ENCODE measurements at regions of chr2 and their contacts with region 1.

Region 1: DNA sequence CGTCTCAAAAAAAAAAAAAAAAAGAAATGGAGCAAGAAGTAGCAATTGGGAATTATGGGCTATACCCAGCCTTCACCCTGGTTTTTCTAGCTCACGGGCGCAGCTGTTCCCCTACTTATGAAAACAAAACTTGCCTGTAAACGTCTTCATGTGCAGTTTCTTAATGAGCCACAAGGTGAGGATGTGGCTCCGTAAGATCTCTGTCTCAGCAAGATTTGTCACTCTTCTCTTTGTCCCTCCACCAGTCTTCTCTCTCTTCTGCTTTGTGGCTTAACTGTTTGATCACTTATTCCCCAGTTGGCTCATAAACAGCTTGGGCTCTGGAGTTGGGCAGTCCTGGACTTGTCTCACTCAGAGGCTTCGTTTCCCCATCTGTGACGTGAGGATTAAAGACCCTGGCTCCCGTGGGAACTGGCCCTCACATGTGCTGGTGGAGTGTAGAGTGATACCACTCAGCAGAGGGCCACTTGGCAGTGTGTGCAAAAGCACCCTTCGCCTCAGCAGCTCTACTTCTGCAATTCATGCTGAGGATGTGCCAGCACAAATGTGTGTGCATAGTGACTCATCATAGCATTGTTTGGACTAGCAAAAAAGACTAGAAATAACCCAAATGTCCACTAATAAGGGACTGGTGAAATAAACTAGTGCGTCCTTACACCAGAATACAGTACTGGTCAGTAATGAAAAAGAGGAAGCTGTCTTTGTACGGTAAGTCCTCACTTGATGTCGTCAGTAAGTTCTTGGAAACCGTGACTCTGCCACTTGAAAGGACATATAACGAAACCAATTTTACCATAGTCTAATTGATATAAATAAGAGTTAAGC is 8.7 kb downstream of the CEP68 start:
- DNase-seq: peak; percentile 70
- ATAC-seq: peak; percentile 89
- H3K4me3 Mint-ChIP-seq: no peak overlapping the region
- H3K27ac Mint-ChIP-seq: peak overlapping the region; percentile 82
- H3K4me1 Mint-ChIP-seq: peaks cover 40% of the 10 kb centered on the region
- H3K27me3 Mint-ChIP-seq: no peaks in the 10 kb centered on the region
- CTCF ChIP-seq: peak; percentile 80

Region 2: DNA sequence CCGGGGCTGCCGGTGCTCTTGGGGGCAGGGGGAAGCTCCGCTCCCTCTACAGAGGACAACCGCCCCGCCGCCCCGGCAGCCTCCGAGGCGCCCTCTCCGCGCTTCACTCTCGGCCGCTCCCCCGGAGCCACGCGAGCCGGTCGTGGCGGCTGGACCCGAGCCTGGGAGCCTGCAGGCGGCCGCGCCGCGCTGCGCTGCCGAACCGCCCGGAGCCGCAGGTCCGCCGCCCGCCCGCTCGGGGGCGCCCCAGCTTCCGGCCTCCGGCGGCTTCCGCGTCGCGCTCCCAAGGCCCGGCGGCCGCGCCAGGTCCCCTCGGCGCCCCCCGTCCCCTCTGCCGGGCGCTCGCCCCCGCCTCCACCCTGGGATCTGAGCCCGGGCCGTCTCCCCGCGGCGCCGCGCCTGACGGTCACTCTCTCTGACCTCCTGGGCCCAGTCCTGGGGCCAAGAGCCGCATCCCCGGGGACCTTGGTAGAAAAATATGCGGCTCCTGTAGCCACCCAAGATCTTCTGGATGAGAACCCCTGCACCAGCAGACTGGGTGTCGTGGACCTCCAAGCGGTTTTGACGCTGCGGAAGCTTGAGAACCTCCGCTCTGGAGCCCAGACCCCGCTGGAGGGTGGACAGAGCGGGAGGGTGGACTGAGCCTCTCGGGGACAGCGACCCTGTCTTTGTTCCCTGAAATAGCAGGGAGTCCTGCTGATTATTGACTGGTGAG is 455.6 kb before region 1 on chr2:
- CTCF ChIA-PET with region 1: no interaction called
- POLR2A ChIA-PET with region 1: no interaction called
- intact Hi-C with region 1: no loop called
- DNase-seq: peak; percentile 60
- ATAC-seq: peak; percentile 60
- H3K4me3 Mint-ChIP-seq: peak overlapping the region; percentile 60
- H3K27ac Mint-ChIP-seq: peak overlapping the region; percentile 59
- H3K4me1 Mint-ChIP-seq: peaks cover 22% of the 10 kb centered on the region
- H3K27me3 Mint-ChIP-seq: no peaks in the 10 kb centered on the region
- CTCF ChIP-seq: peak; percentile 26

Region 3: GRCh38 chr2:65024149-65024829 is 40.7 kb before region 1 on chr2:
- CTCF ChIA-PET with region 1: no interaction called
- POLR2A ChIA-PET with region 1: no interaction called
- intact Hi-C with region 1: no loop called
- DNase-seq: no peak
- ATAC-seq: no peak
- H3K4me3 Mint-ChIP-seq: no peak overlapping the region
- H3K27ac Mint-ChIP-seq: no peak overlapping the region
- H3K4me1 Mint-ChIP-seq: peaks cover 4% of the 10 kb centered on the region
- H3K27me3 Mint-ChIP-seq: no peaks in the 10 kb centered on the region
- CTCF ChIP-seq: no peak

Region 4: GRCh38 chr2:65040400-65041261 is 24.3 kb before region 1 on chr2:
- CTCF ChIA-PET with region 1: interaction called, 12 read pairs
- POLR2A ChIA-PET with region 1: no interaction called
- intact Hi-C with region 1: no loop called
- DNase-seq: peak; percentile 87
- ATAC-seq: peak; percentile 97
- H3K4me3 Mint-ChIP-seq: no peak overlapping the region
- H3K27ac Mint-ChIP-seq: no peak overlapping the region
- H3K4me1 Mint-ChIP-seq: peaks cover 11% of the 10 kb centered on the region
- H3K27me3 Mint-ChIP-seq: no peaks in the 10 kb centered on the region
- CTCF ChIP-seq: peak; percentile 99

Region 5: DNA sequence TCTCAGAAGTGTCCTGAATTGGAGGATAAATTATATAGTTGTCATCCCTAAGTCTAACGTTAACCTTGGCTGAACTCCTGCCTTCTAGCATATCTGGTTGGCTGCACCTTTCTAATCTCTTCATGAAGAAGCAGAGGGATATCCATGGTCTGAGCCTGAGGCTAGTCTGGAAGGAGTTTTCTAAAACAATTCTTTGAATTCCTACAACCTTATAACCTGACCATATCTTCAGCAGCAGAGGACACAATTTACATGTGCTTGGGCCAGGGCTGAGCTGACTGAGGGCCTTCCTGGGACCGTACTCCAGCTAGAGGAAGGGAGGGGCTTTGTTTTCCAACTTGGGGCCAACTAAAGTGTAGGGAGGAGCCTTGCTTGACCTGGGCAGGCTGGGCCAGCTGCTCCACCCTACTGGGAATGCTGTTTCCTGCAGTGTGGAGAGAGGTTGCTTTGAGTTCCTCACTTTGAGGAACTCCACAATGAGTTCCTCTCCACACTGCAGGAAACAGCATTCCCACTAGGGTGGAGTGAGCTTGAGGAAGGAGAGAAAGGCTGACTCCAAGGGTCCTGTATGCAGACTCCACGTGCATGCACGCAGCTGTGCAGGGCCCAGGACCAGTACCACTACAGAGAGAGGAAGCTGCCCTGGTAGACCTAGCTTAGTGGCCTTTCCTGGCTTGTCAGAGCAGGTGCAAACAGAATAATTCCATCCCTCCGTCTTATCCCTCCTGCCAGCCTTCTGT is 10.8 kb after region 1 on chr2:
- CTCF ChIA-PET with region 1: interaction called, 21 read pairs
- POLR2A ChIA-PET with region 1: interaction called, 6 read pairs
- intact Hi-C with region 1: no loop called
- DNase-seq: no peak
- ATAC-seq: no peak
- H3K4me3 Mint-ChIP-seq: no peak overlapping the region
- H3K27ac Mint-ChIP-seq: no peak overlapping the region
- H3K4me1 Mint-ChIP-seq: peaks cover 3% of the 10 kb centered on the region
- H3K27me3 Mint-ChIP-seq: no peaks in the 10 kb centered on the region
- CTCF ChIP-seq: no peak

Region 6: DNA sequence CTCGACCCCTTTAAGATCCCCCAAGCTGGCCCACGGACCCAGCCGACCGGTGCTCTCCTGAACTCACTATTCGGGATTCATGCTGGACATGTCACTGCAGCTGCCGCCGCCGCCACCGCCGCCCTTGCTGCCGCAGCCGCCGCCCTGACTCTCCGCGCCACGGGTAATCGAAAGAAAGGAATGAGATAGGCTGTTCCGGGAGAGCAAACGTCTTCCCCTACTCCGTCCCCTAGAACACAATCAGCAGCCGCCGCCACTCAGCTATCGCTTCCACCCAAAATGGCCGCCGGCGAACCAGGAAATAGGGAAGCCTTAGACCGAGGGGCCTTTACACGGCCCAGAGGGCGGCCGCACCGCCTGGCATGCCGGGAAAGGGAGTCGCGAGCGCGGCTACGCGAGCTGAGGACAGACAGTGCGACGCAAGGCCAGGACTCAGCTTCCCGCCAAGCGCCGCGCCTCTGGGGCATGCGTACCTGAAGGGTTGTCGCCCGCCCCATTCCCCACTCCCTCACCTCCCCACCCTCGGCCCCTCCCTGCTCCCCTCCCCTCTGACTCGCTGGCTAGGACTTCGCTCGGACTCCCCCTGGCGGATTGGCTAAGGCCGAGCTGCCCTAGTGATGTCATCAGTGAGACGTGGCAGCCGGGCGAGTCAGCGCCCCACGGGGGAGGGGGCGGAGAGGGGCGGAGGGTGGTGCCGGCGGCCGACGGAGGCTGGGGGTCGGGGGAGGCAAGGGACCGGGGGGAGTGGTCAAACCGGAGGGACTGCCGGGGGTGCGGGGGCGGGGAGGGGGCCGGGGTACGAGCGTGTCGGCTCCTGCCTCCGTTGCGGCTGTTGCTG is 65.1 kb after region 1 on chr2 and contains the start of gene RAB1A:
- CTCF ChIA-PET with region 1: interaction called, 23 read pairs
- POLR2A ChIA-PET with region 1: interaction called, 3 read pairs
- intact Hi-C with region 1: loop called (anchors 5 kb)
- DNase-seq: peak; percentile 99
- ATAC-seq: peak; percentile 95
- H3K4me3 Mint-ChIP-seq: peak within 1 kb of the TSS; percentile 100
- H3K27ac Mint-ChIP-seq: peak within 1 kb of the TSS; percentile 100
- H3K4me1 Mint-ChIP-seq: peaks cover 35% of the 10 kb centered on the region
- H3K27me3 Mint-ChIP-seq: no peaks in the 10 kb centered on the region
- CTCF ChIP-seq: no peak
- total RNA-seq, gene RAB1A: 71.8 to 75.8 TPM

Region 7: DNA sequence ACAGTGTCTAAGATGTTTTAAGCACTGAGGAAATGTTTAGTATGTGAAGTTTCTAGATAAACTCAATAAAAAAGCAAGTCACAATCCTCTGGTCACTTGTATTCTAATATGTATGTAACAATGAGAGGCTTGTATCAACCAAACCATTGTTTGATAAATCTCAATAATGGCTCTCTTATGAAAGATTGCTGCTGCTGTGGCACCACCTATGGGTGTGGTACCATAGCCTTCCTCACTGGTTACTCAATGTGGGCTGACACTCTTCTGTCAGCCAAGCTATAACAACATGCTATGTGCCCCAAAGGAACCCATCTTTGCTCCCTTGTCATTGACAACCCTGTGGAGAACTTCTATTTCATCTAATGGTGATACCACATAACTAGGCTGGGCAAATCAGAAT is 77.6 kb after region 1 on chr2:
- CTCF ChIA-PET with region 1: interaction called, 21 read pairs
- POLR2A ChIA-PET with region 1: no interaction called
- intact Hi-C with region 1: no loop called
- DNase-seq: peak; percentile 33
- ATAC-seq: peak; percentile 47
- H3K4me3 Mint-ChIP-seq: no peak overlapping the region
- H3K27ac Mint-ChIP-seq: no peak overlapping the region
- H3K4me1 Mint-ChIP-seq: no peaks in the 10 kb centered on the region
- H3K27me3 Mint-ChIP-seq: peaks cover 2% of the 10 kb centered on the region
- CTCF ChIP-seq: no peak

Region 8: GRCh38 chr2:65169760-65170136 is 104.8 kb after region 1 on chr2:
- CTCF ChIA-PET with region 1: interaction called, 105 read pairs
- POLR2A ChIA-PET with region 1: no interaction called
- intact Hi-C with region 1: loop called (anchors 5 kb)
- DNase-seq: no peak
- ATAC-seq: no peak
- H3K4me3 Mint-ChIP-seq: no peak overlapping the region
- H3K27ac Mint-ChIP-seq: no peak overlapping the region
- H3K4me1 Mint-ChIP-seq: peaks cover 2% of the 10 kb centered on the region
- H3K27me3 Mint-ChIP-seq: no peaks in the 10 kb centered on the region
- CTCF ChIP-seq: no peak

Region 9: GRCh38 chr2:65576861-65577601 is 512.1 kb after region 1 on chr2:
- CTCF ChIA-PET with region 1: interaction called, 8 read pairs
- POLR2A ChIA-PET with region 1: no interaction called
- intact Hi-C with region 1: loop called (anchors 5 kb)
- DNase-seq: no peak
- ATAC-seq: no peak
- H3K4me3 Mint-ChIP-seq: no peak overlapping the region
- H3K27ac Mint-ChIP-seq: no peak overlapping the region
- H3K4me1 Mint-ChIP-seq: no peaks in the 10 kb centered on the region
- H3K27me3 Mint-ChIP-seq: peaks cover 5% of the 10 kb centered on the region
- CTCF ChIP-seq: no peak